Head of caudate nucleus (tissue), 42 donors: ENCODE measurements at regions of chr15 and their contacts with region 1.

Region 1: GRCh38 chr15:77496710-77497103 is 76.0 kb downstream of the HMG20A start:
- DNase-seq: peak; percentile 58 to 95 (median 85)

Region 2: DNA sequence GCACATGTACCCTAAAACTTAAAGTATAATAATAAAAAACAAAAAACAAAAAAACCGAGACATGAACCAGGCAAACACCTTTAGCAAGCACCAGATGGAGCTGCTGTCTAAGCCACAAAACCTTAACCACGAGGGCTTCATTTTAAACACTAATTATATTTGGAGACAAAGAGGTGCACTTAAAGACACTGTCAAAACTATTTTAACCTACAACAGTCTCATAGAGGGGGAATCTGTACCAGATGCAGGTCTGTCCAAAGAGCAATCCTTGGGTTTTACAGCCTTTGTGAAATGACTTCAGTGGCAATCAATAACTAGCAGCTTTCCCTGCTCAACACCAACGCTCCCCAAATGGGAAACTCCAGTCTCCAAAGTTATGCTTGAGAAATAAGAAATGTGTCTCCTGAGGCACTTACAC is 310.1 kb before region 1 on chr15:
- intact Hi-C with region 1: loop called (anchors 5 kb)
- DNase-seq: peak in 8 of 42 donors; percentile 5 to 31 (median 12)

Region 3: DNA sequence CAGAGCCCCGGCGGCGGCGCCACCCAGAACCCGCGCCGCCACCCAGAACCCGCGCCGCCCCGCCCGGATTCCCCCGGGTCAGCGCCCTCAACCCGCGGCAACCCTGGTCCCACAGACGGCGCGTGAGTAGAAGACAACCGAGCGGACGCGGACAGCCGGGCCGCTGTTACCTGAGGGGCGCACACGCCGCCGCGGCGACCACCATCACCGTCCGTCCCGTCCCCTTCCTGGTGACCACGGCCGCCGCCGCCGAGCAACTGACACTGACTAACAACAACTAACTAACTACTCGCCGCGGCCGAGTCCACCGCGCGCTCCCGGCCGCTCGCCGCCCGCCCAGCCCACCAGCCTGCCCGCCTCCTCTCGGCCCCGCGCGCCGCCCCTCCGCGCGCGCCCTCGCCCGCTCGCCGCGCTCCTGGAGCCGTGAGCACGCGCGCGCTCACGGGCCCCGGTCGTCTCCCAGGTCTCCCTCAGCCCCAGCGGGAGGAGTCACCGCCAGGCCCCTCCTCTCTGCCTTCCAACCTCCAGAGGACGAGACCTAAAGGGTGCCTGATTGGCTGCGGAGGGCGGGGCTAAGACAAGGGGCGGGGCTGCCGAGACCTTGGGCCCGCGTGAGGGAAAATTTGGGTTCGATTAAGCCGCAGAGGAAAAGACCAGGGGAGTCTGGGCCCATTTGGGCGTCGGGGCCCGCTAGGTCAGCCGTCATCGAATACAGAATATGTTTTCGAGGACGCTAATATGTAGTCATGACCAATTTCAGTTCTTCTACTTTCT is 76.7 kb before region 1 on chr15 and contains the start of gene PEAK1:
- intact Hi-C with region 1: loop called (anchors 2 kb)
- DNase-seq: peak; percentile 95 to 100 (median 99)

Region 4: DNA sequence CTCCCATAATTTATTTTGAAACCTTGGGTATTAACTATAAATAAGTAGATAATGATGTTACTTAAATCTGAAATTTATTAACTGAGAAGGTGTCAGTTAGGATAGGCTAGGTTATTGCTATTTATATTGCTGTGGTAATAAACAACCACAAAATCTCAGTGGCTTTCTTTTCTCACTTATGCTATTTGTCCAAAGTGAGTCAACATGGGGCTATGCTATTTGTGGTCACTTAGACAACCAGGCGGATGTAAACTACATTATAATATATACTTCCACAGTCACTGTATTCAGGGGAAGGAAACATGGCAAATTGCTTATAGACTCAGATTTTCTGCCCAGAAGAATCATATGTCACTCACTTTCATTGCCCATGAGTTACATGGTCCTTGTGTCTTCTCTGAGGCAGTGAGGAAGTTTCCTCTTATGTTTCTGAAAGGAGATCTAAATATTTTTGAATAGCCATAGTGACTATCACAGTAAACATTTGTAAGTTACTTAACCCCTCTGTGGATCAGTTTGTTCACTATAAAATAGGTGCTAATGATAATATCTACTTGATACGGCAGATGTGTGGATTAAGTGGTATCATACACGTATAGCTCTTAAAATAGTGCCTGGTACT is 56.2 kb before region 1 on chr15:
- intact Hi-C with region 1: no loop called
- DNase-seq: no peak